ENCODE measurements at regions of chr6 and their contacts with region 1.

Region 1: GRCh38 chr6:2848851-2849250 is 7.2 kb upstream of the SERPINB1 start:
- DNase-seq: peak; percentile 61
- ATAC-seq: peak; percentile 81
- H3K4me3 Mint-ChIP-seq: peak overlapping the region; percentile 66
- H3K27ac Mint-ChIP-seq: peak overlapping the region; percentile 90
- H3K4me1 Mint-ChIP-seq: peaks cover 37% of the 10 kb centered on the region
- H3K27me3 Mint-ChIP-seq: no peaks in the 10 kb centered on the region

Region 2: DNA sequence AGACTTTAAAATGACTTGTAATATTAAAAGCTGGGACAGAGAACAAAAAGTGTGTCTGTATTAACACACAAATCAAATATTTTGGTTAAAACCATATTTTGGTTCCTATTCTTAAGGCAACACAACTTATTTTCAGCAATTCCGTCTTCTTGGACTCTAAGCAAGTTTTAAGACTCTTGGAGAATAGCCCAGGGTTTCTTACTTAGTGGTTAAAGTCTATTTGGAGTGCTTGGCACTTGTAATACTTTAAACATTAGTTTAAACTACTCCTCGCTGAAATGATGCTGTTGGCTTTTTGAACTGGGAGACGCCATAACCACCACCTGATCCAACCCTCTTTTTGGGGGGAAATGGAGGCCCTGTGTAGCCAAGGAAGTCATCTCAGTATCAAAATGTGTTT is 493.7 kb before region 1 on chr6:
- POLR2A ChIA-PET with region 1: no interaction called
- DNase-seq: no peak
- ATAC-seq: no peak
- H3K4me3 Mint-ChIP-seq: no peak overlapping the region
- H3K27ac Mint-ChIP-seq: no peak overlapping the region
- H3K4me1 Mint-ChIP-seq: no peaks in the 10 kb centered on the region
- H3K27me3 Mint-ChIP-seq: peaks cover 4% of the 10 kb centered on the region

Region 3: DNA sequence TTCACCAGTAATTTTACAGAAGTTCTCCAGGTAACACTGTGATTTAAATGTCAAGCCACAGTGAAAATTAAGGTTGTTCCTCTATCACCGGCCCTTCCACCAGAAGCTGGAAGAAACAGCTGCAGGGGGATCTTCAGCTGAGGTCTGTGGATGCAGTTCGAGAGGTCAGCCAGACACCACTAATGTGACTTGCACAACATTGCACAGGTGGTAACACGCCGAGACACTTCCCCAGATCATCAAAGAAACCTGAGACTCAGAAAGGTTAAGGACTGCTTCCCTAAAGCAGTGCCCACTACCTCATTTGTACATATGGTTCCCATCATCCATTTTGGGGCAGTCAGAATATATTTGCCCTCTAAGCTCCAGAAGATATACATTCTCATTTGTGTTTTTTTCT is 62.3 kb after region 1 on chr6:
- POLR2A ChIA-PET with region 1: interaction called, 13 read pairs
- DNase-seq: no peak
- ATAC-seq: no peak
- H3K4me3 Mint-ChIP-seq: no peak overlapping the region
- H3K27ac Mint-ChIP-seq: no peak overlapping the region
- H3K4me1 Mint-ChIP-seq: peaks cover 23% of the 10 kb centered on the region
- H3K27me3 Mint-ChIP-seq: peaks cover 1% of the 10 kb centered on the region

Measured in activated naive CD8-positive, alpha-beta T cell treated with anti-CD3 and anti-CD28 coated beads, Interleukin-2, amount 10 ng/mL, durations not matched to agents 7 days and 5 days (primary cell).